Astrocyte of the cerebellum (primary cell): ENCODE measurements at regions of chr7 and their contacts with region 1.

Region 1: DNA sequence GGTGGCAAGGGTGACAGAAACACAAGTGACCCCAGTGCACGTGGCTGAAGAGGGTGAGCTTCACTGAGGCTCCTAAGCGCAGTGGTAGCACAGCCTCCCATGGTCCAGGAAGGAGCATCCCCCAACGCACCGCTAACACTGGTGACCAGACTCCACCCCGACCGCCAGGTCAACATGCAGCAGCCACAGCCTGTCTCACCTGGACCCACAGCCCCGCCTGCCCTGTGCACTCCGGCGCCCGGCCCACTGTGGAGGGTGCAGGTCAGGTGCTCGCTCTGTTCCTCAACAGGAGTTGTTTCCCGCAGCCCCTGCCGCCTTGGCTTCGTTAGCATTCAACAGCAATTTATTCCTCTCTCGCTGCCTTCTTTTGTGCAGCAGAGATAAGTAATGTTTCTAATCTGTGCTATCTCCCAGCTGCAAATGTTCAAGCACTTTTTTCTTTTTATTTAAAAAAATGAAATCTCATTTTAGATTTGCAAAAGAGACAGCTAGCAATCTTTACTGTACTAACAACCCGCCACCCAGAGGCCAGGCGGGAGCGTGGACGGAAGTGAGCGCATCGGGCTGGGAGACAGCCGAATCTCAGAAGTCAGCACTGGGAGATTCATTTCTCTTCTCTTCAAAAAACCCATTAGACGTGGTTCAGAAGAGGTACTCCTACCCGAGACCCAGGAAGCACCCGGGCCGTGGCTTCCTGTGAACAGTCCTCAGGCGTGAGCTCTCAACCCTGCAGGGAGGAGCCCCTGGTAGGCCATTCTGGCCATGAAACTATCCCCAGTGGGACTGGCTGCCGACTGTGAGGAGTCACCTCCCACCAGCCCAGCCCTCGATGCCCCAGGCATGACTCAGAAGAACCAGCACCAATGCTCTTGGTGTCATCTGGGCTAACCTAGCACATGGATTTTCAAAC is 133.4 kb downstream of the MAD1L1 start:
- DNase-seq: no peak
- H3K4me3 ChIP-seq: no peak overlapping the region
- CTCF ChIP-seq: no peak

Region 2: GRCh38 chr7:1787241-1787640 is 312.1 kb before region 1 on chr7:
- in situ Hi-C with region 1: no loop called
- DNase-seq: no peak
- H3K4me3 ChIP-seq: no peak overlapping the region
- CTCF ChIP-seq: no peak

Region 3: GRCh38 chr7:2019607-2020511 is 79.4 kb before region 1 on chr7:
- in situ Hi-C with region 1: loop called (anchors 10 kb)
- DNase-seq: peak; percentile 71
- H3K4me3 ChIP-seq: no peak overlapping the region
- CTCF ChIP-seq: no peak